SK-N-SH (cell line): ENCODE measurements at regions of chr3 and their contacts with region 1.

Region 1: DNA sequence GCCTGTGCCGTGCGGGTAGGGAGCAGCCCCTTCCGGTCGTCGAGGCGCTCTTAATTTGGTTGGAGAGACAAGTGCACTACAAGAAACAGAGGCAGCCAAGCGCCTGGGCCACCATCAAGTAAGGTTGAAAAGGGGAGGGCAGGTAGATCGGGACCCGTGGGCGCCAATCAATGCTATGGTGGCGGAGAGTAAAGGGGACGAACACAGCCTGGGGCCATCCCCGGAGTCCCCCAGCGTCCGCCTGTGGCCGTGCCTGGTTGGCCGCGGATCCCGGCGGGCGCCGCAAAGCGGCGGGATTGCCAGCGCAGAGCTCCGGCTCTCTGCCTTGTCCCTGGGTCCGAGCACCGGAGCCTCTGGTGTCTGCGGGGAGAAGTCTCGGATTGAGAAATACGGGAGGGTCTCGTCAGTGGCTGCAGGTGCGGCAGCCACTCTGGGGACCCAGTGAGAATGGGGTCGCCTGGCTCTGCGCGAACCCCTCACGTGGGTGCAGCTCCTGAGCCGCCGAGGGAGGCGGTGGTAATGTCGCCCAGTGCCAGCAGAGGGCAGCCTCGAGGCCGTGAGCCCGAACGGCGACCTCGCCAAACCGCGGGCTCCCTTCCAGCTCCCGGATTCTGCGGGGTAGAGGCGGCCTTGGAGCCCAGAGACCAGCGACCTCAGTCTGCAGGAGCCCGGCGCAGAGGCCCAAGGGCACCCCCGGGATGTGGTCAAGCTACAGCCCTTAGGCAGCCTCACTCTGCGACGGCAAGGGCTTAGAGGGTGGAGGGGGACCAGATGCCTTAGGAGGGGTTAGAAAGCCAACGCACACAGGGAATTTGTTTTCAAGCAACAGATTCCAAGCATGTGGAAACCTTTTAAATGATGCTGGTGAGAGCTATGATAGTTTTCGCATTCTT is 10.8 kb downstream of the FOXL2 start:
- DNase-seq: peak; percentile 94
- H3K4me3 ChIP-seq: peak overlapping the region; percentile 39 to 52
- H3K27ac ChIP-seq: no peak overlapping the region
- H3K4me1 ChIP-seq: peaks cover 0 to 8% of the 10 kb centered on the region in 2 experiments; a peak in 1 of 4 replicates
- H3K27me3 ChIP-seq: peaks cover 74% of the 10 kb centered on the region
- CTCF ChIP-seq: peak; percentile 77
- EP300 ChIP-seq: no peak
- RAD21 ChIP-seq: peak; percentile 42

Region 2: DNA sequence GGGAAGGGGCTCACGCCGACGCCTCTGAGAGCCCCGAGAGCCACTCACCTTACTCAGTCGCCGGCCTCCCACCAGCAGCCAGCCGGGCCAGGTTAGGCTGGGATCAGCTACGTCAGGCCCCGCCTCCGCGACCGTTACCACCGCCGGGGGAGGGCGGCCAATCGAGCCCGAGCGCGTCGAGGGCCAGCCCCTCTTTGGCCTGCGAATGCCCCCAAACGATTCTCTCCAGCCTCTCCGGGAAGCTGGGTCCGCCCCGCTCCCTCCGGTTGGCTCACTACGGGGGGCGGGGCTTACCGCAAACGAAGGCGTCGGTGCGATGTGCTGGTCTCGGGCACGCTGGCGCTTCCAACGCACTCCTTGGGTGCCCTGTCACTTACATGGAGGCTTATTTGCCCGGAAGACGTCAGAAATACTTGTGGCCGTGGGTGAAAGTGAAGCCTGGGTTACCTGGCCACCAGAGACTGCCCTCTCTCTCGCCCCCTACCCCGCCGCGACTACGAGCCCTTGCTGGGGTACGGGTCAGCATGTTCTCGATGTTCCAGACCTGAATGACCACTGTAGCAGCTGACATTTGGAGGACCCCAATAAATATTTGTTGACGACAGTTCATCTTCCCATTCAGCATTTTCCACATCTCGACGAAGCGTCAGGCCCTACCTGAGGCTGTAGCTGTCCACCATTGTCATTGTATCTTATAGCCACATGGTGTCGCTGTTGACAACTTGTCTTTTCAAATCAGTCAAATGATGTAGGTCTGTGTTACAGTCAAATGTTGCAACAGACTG is 341.8 kb before region 1 on chr3 and contains the start of gene CEP70:
- CTCF ChIA-PET with region 1: interaction called, 24 read pairs
- POLR2A ChIA-PET with region 1: interaction called, 4 read pairs
- DNase-seq: peak; percentile 95
- H3K4me3 ChIP-seq: peak within 1 kb of the TSS; percentile 79 to 92
- H3K27ac ChIP-seq: peak within 1 kb of the TSS; percentile 72 to 85
- H3K4me1 ChIP-seq: peaks cover 0 to 7% of the 10 kb centered on the region in 2 experiments; a peak in 2 of 4 replicates
- H3K27me3 ChIP-seq: no peaks in the 10 kb centered on the region
- CTCF ChIP-seq: peak; percentile 88
- EP300 ChIP-seq: no peak
- RAD21 ChIP-seq: peak; percentile 90
- polyA plus RNA-seq, gene CEP70: 3.7 and 4.0 TPM in 2 replicates

Region 3: DNA sequence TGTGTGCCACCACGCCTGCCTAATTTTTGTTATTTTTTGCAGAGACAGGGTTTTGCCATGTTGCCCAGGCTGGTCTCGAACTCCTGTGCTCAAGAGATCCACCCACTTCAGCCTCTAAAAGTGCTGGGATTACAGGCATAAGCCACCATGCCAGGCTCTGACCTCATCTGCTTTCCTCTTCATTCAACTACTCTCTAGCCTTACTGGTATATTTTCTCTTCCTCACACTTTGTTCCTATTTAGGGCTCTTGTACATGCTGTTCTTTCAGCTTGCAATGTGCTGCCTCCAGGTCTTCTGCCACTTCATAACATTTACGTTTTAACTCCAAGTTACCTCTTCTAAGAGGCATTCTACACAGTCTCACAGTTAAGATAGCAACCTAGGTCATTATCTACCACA is 136.3 kb before region 1 on chr3:
- CTCF ChIA-PET with region 1: no interaction called
- POLR2A ChIA-PET with region 1: no interaction called
- DNase-seq: no peak
- H3K4me3 ChIP-seq: no peak overlapping the region
- H3K27ac ChIP-seq: no peak overlapping the region
- H3K4me1 ChIP-seq: no peaks in the 10 kb centered on the region
- H3K27me3 ChIP-seq: no peaks in the 10 kb centered on the region
- CTCF ChIP-seq: no peak
- EP300 ChIP-seq: no peak
- RAD21 ChIP-seq: no peak

Region 4: DNA sequence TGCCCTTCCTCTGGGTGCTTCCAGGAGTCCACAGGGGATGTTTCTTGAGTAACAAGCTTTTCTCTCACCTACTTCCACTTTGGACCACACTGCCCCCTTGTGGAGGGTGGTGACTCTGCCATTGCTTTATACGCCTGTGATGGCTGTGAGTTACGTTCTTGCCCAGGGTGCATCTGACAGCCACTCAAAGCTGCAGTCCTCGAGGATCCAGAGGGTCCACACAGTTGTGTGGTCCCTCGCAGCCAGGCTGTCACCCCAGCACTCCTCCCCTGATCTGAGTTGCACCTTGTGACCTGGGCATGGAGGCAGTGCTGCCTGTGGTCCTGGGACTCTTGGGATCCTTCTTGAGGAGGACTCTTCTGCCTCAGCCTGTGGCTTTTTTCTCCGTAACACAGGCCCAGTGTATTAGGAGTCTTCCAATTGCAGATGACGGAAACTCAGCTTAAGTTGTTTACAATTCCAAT is 12.5 kb before region 1 on chr3:
- CTCF ChIA-PET with region 1: interaction called, 62 read pairs
- POLR2A ChIA-PET with region 1: no interaction called
- DNase-seq: peak; percentile 72
- H3K4me3 ChIP-seq: peak overlapping the region in 1 of 2 experiments; percentile 34; a peak in 1 of 4 replicates
- H3K27ac ChIP-seq: no peak overlapping the region
- H3K4me1 ChIP-seq: peaks cover 2 to 11% of the 10 kb centered on the region in 2 experiments; a peak in 2 of 4 replicates
- H3K27me3 ChIP-seq: no peaks in the 10 kb centered on the region; the same call in 1 of the 2 replicates
- CTCF ChIP-seq: peak; percentile 83
- EP300 ChIP-seq: no peak
- RAD21 ChIP-seq: peak; percentile 73

Region 5: DNA sequence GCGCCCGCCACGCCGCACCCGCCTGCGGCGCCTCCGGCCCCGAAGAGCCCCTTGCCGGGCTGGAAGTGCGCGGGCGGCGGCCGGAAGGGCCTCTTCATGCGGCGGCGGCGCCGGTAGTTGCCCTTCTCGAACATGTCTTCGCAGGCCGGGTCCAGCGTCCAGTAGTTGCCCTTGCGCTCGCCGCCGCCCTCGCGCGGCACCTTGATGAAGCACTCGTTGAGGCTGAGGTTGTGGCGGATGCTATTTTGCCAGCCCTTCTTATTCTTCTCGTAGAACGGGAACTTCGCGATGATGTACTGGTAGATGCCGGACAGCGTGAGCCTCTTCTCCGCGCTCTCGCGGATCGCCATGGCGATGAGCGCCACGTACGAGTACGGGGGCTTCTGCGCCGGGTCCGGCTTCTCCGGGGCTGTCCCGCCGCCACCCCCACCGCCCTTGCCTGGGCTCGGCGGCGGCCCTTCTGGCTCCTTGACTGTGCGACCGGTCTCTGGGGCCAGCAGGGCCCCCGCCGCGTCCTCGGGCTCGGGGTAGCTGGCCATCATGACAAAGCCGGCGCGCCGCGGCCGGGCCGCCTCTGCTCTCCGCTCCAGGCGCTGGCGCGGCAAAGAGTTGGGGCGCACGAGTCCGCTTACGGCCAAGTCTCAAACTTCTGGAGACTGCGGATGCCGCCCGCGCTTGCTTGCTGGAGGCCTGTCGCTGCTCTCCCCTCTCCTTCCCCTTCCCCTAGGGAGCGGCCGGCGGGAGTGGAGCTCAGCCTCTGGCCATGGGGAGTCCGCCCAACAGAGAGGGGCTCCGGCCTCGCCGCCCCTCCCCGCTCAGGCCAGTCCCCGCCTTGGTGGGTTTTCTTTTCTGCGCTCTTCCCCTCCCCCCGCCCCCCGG is 10.3 kb after region 1 on chr3:
- CTCF ChIA-PET with region 1: interaction called, 100 read pairs
- POLR2A ChIA-PET with region 1: no interaction called
- DNase-seq: peak; percentile 41
- H3K4me3 ChIP-seq: no peak overlapping the region; a peak in 2 of 4 replicates
- H3K27ac ChIP-seq: no peak overlapping the region
- H3K4me1 ChIP-seq: peaks cover 0 to 7% of the 10 kb centered on the region in 2 experiments; a peak in 2 of 4 replicates
- H3K27me3 ChIP-seq: peaks cover 97% of the 10 kb centered on the region
- CTCF ChIP-seq: no peak
- EP300 ChIP-seq: no peak
- RAD21 ChIP-seq: no peak

Region 6: GRCh38 chr3:138974462-138974861 is 38.4 kb after region 1 on chr3:
- CTCF ChIA-PET with region 1: interaction called, 23 read pairs
- POLR2A ChIA-PET with region 1: no interaction called
- DNase-seq: no peak
- H3K4me3 ChIP-seq: no peak overlapping the region
- H3K27ac ChIP-seq: no peak overlapping the region
- H3K4me1 ChIP-seq: no peaks in the 10 kb centered on the region
- H3K27me3 ChIP-seq: no peaks in the 10 kb centered on the region; the same call in 1 of the 2 replicates
- CTCF ChIP-seq: no peak
- EP300 ChIP-seq: no peak
- RAD21 ChIP-seq: no peak

Region 7: DNA sequence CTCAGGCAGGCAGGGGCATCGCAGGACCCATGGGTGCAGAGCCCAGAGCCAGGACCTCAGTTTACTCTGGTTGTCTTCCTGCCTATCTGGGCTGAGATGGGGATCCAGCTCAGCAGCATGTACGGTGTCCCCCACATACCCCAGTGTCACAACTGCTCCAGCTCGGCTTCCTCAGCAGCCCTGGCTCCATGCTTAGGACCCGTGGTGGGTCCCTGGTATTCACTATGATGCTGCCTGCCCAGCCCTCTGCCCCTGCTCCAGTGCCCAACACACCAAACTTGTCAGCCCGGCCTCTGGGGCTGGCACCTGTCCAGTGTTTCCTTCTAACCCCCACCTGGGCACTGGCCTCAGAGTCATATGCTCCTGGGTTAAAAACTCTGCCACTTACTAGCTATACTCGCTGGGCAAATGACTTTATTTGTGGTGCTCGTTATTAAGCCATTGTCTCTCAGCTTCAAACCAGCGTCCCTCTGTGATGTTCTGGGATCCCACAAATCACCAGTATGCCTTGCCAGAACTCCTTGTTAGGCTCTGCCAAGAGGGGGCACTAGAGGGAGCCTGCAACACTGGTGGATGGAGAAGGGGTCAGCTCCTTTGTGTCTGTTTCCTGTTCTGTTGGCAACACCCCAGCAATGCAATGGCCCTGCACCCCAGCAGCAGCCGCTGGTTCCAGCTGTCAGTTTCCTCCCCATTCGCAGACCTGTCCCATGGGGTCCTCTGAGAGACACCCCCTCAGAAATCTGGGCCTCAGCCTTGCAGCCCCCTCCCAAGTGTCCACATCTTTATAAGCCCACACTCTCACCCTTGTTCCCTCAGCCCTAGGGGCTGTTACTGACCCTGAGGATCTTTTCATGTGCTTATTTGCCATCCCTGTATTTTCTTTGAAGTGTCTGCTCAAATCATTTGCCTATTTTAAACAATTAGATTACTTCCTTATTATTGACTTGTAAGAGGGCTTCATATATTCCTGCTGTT is 383.6 kb after region 1 on chr3:
- CTCF ChIA-PET with region 1: interaction called, 17 read pairs
- POLR2A ChIA-PET with region 1: no interaction called
- DNase-seq: peak; percentile 51
- H3K4me3 ChIP-seq: no peak overlapping the region
- H3K27ac ChIP-seq: no peak overlapping the region
- H3K4me1 ChIP-seq: peaks cover 0 to 13% of the 10 kb centered on the region in 2 experiments; a peak in 1 of 4 replicates
- H3K27me3 ChIP-seq: no peaks in the 10 kb centered on the region
- CTCF ChIP-seq: peak; percentile 49
- EP300 ChIP-seq: no peak
- RAD21 ChIP-seq: no peak

Region 8: DNA sequence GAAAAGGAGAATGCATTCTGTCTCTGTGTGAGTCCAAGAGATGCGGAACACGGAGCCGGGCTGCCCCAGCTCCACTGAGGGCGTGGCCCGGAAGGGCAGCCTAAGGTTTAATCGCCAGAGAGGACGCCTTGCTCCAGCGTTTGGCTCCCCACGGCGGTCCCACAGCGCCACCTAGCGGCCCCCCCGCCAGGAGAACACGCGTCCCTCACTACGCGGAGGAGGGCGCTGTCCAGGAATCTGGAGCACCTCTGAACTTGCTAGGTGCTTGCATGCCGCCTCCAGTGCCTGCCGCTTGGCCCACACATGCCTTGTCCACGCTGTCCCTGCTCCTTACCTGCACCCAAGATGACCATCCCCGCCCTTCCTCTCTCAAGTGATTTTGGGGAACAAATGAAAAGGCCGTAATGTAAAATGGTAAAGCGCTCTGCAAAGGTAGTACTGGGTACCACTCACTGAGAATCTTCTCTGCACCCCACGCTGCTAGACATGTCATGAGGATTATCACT is 393.3 kb after region 1 on chr3:
- CTCF ChIA-PET with region 1: interaction called, 25 read pairs
- POLR2A ChIA-PET with region 1: no interaction called
- DNase-seq: peak; percentile 87
- H3K4me3 ChIP-seq: peak overlapping the region; percentile 24 to 55; a peak in 2 of 4 replicates
- H3K27ac ChIP-seq: no peak overlapping the region
- H3K4me1 ChIP-seq: peaks cover 0 to 5% of the 10 kb centered on the region in 2 experiments; a peak in 1 of 4 replicates
- H3K27me3 ChIP-seq: peaks cover 11% of the 10 kb centered on the region; the same call in 1 of the 2 replicates
- CTCF ChIP-seq: peak; percentile 99
- EP300 ChIP-seq: no peak
- RAD21 ChIP-seq: peak; percentile 98